Mammary epithelial cell (primary cell): ENCODE measurements at regions of chr20 and their contacts with region 1.

Region 1: DNA sequence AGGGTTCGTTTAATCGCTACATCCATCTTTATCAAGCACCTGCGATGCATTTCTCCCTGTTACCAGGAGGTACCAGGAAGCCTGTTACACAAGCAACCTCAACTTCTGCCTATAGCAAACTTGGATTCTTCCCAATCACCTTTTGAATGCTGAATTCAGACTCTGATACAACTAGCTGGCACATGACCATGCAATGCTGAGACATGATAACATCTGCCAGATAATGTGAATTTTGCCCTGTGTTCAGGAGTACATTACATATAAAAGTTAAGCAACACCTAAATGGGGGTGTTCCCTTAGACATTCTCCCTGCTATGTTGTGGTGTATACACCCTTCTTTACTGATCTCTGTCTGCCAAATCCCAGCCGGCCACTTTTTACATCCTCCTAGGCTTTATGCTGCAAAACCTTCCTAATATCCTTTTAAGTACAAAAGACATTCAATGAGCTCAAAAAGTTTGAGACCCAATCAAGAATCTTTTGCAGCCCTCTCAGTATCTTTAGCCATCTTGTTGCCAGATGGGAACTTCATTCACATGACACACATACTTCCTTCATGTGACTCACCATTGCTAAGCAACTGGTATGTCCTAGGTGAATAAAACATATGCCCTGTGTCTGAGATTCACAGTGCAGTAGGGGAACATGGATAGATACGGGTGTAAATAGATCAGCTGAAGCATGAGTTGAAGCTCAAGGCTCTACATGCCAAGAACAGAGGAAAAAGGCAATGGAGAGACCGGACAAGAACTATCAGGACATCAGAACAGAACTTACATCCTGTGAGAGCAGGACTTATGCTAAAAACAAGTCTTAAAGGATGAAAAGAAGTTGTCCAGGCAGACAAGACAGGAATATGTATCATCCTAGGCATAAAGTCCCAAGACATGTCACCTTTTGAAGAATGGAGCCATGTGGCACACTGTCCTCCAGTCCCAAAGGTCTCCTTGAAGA is 84.3 kb downstream of the ZHX3 start:
- DNase-seq: peak; percentile 80
- H3K4me3 ChIP-seq: no peak overlapping the region
- H3K27ac ChIP-seq: peak overlapping the region; percentile 98
- H3K4me1 ChIP-seq: peaks cover 35% of the 10 kb centered on the region
- H3K27me3 ChIP-seq: no peaks in the 10 kb centered on the region
- CTCF ChIP-seq: no peak

Region 2: GRCh38 chr20:40970201-40970600 is 263.0 kb before region 1 on chr20:
- CTCF ChIA-PET with region 1: no interaction called
- dilution Hi-C with region 1: no loop called
- in situ Hi-C with region 1: no loop called
- intact Hi-C with region 1: loop called (anchors 1 kb)
- DNase-seq: no peak
- H3K4me3 ChIP-seq: no peak overlapping the region
- H3K27ac ChIP-seq: no peak overlapping the region
- H3K4me1 ChIP-seq: peaks cover 8% of the 10 kb centered on the region
- H3K27me3 ChIP-seq: no peaks in the 10 kb centered on the region
- CTCF ChIP-seq: peak in 1 of 2 donors; percentile 41

Region 3: GRCh38 chr20:41137614-41138474 is 95.4 kb before region 1 on chr20:
- CTCF ChIA-PET with region 1: interaction called, 4 read pairs
- dilution Hi-C with region 1: no loop called
- in situ Hi-C with region 1: no loop called
- intact Hi-C with region 1: loop called (anchors 1 kb)
- DNase-seq: peak; percentile 28
- H3K4me3 ChIP-seq: peak overlapping the region; percentile 60 to 83 (median 71)
- H3K27ac ChIP-seq: peak overlapping the region; percentile 55
- H3K4me1 ChIP-seq: peaks cover 56% of the 10 kb centered on the region
- H3K27me3 ChIP-seq: no peaks in the 10 kb centered on the region
- CTCF ChIP-seq: no peak

Region 4: GRCh38 chr20:41218466-41218865 is 14.8 kb before region 1 on chr20:
- CTCF ChIA-PET with region 1: no interaction called
- dilution Hi-C with region 1: no loop called
- in situ Hi-C with region 1: no loop called
- intact Hi-C with region 1: loop called (anchors 1 kb)
- DNase-seq: peak; percentile 12
- H3K4me3 ChIP-seq: no peak overlapping the region
- H3K27ac ChIP-seq: no peak overlapping the region
- H3K4me1 ChIP-seq: peaks cover 8% of the 10 kb centered on the region
- H3K27me3 ChIP-seq: no peaks in the 10 kb centered on the region
- CTCF ChIP-seq: no peak

Region 5: DNA sequence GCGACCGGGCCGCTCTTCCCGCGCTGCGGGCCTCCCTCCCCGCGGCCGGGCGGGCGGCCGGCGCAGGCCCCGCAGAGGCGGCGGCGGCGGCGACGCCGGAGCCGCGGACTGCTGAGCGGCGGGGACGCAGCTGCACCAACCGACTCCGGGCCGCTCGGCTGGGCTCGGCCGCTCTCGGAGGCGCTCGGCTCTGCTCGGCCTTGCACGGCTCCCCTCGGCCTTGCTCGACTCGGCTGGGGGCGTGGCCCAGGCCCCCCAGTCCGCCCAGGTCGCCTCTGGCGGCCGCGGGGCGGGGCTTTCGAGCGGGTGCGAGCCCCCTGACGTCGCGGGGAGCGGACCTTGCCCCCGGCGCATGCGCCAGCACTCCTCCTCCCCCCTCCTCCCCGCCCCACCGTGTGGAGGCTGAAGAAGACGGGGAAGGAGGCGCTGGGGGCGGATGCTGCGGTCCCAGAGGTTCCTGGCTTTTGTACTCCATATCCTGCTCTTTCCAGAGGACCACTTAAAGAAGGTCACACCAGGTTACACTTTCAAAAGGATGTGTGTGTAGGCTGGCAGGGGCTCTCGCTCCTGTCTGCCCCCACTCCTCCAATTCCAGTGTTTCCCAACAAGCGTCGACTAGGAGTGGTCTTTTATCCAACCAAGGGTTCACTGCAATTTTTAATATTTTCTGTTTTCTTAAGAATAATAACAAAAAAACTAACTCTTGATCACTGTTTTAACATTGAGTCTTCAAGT is 84.5 kb after region 1 on chr20 and contains the start of gene ZHX3:
- CTCF ChIA-PET with region 1: no interaction called
- dilution Hi-C with region 1: no loop called
- in situ Hi-C with region 1: no loop called
- intact Hi-C with region 1: loop called (anchors 1 kb)
- DNase-seq: peak; percentile 95
- H3K4me3 ChIP-seq: peak within 1 kb of the TSS; percentile 79 to 94 (median 79)
- H3K27ac ChIP-seq: peak within 1 kb of the TSS; percentile 92
- H3K4me1 ChIP-seq: peaks cover 16% of the 10 kb centered on the region
- H3K27me3 ChIP-seq: no peaks in the 10 kb centered on the region
- CTCF ChIP-seq: no peak
- total RNA-seq, gene ZHX3: 27.0 to 39.7 TPM